Ascending aorta (tissue), 2 donors: ENCODE measurements at regions of chr6 and their contacts with region 1.

Region 1: DNA sequence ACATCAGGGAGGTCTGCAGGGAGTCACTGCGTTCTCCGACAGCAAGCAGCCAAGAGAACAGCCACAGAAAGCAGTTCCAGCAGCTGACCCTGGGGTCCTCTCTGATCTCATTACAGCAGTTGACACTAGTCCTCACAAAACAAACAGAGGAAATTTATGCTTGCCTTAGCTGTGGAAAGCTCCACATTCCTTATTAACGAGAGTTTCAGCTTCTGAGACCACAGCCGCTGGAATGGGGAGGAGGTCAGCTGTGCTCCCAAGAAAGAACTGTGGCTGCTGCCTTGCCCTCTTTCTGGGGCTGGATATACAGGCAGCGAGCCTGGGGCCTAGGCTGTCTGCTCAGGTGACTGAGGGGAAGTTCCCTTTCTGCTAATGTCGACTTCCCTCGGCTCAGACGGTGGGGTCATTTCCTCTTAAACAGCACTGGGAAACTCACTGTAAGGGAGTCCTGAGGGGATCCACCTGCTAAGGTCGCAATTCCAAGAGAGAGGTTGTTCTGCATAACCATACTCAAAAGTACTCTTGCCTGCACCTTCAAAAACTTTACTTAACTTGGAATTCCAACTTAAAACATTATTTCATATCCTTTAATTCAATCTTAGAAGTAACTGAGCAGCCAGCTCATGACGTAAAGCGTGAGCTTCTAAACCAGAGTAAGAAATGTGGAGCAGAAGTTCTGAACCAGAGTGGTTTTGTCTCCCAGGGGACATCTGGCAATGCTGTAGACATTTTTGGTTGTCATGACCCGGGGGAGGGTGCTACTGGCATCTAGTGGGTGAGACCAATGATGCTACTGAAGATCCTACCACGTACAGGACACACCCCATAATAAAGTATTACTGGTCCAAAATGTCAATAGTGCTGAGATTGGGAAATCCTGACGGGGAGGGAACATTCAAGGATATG is 80.3 kb downstream of the BACH2 start:
- DNase-seq: no peak
- H3K4me3 ChIP-seq: no peak overlapping the region
- H3K27ac ChIP-seq: peak overlapping the region; percentile 51 to 81
- H3K4me1 ChIP-seq: peaks cover 3 to 28% of the 10 kb centered on the region in 2 donors
- H3K27me3 ChIP-seq: no peaks in the 10 kb centered on the region
- CTCF ChIP-seq: no peak

Region 2: DNA sequence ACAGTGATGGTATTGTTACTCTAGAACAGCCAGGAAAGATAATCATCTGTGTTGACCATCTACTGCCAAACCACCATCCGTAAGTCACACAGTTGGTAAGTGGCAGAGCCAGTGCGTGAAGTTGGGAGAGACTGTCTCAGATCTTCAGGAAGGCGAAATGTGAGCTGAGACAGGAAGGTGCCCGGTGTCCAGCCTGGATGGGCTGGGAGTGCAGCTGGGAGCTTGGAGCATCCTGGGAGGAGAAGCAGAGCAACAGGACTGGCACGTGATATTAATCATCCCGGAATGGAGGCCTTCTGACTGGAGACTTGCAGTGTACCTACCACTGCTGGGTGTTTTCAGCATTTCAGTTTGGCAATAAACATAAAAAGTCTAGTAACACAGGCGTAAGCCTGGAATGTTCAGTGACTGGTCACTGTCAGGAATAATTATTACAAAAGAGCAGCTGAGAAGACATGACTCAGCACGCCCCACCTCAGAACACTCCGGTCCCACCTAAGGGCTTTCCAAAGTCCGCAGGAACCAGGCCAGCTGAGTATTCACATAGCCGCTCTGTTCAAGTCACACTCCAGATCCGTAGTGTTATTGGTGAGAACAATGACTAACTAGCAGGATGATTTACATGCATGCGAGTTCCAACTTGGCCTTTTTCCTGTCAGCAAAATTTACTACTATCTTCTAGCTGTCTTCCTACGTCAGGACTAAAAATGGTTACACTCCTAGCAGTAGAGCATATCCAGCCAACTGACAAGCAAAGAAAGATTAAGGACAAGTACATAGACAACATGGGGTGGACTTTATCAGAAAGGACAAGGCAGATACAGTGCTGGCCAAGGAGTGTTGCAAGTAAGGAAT is 1180.8 kb before region 1 on chr6:
- intact Hi-C with region 1: loop called (anchors 5 kb)
- DNase-seq: peak; percentile 78 to 95
- H3K4me3 ChIP-seq: peak overlapping the region; percentile 1 to 15
- H3K27ac ChIP-seq: peak overlapping the region; percentile 86 to 87
- H3K4me1 ChIP-seq: peaks cover 4 to 17% of the 10 kb centered on the region in 2 donors
- H3K27me3 ChIP-seq: no peaks in the 10 kb centered on the region
- CTCF ChIP-seq: no peak

Region 3: DNA sequence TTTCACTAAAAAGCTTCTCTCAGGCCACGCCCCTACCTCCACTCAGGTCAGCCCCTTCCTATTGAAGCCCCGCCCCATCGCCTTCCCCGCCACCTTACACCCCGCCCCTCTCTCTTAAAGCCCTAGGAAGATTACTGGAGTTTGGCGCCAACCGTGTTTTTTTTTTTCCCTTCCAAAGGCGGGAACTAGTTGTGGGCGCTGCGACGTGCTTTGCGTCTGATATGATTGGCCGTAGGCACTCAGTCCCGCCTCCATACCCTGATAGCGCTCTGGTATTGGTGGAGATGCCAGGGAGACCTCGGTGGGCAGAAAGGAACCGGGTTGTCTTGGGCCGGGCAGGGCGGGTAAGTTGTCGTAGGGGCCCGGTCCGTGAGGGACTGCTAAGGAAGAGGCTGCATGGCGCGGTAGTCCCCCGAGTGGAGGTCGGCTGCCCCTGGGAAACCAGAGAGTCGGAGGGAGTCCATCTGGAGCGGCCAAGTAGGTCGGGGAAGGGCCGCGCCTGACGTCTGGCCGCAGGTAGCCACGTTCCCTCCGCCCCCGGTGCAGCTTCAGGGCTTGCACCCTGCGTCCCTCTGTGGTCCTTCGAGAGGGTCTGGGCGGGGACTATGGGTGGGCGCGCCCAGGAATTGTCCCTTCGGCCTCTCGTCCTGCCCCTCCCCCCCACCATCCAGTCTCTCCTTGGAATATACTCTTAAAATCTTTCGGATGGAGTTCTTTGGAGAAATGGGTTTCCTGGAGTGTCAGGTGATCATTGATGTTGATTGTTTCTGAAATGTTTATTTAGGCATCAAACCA is 386.5 kb before region 1 on chr6 and contains the start of gene CASP8AP2:
- intact Hi-C with region 1: loop called (anchors 1 kb)
- DNase-seq: peak; percentile 90 to 98
- H3K4me3 ChIP-seq: peak within 1 kb of the TSS; percentile 71 to 73
- H3K27ac ChIP-seq: peak within 1 kb of the TSS; percentile 85 to 89
- H3K4me1 ChIP-seq: peaks cover 0 to 11% of the 10 kb centered on the region in 2 donors
- H3K27me3 ChIP-seq: no peaks in the 10 kb centered on the region
- CTCF ChIP-seq: no peak
- total RNA-seq, gene CASP8AP2: 6.7 TPM

Region 4: GRCh38 chr6:89895276-89895874 is 320.9 kb before region 1 on chr6:
- intact Hi-C with region 1: no loop called
- DNase-seq: no peak
- H3K4me3 ChIP-seq: no peak overlapping the region
- H3K27ac ChIP-seq: no peak overlapping the region
- H3K4me1 ChIP-seq: no peaks in the 10 kb centered on the region
- H3K27me3 ChIP-seq: no peaks in the 10 kb centered on the region
- CTCF ChIP-seq: no peak

Region 5: GRCh38 chr6:89999154-89999553 is 217.2 kb before region 1 on chr6:
- intact Hi-C with region 1: loop called (anchors 5 kb)
- DNase-seq: no peak
- H3K4me3 ChIP-seq: no peak overlapping the region
- H3K27ac ChIP-seq: peak overlapping the region in 1 of 2 donors; percentile 62
- H3K4me1 ChIP-seq: peaks cover 3 to 17% of the 10 kb centered on the region in 2 donors
- H3K27me3 ChIP-seq: no peaks in the 10 kb centered on the region
- CTCF ChIP-seq: no peak

Region 6: GRCh38 chr6:90179190-90180169 is 36.8 kb before region 1 on chr6:
- intact Hi-C with region 1: loop called (anchors 5 kb)
- DNase-seq: no peak
- H3K4me3 ChIP-seq: no peak overlapping the region
- H3K27ac ChIP-seq: no peak overlapping the region
- H3K4me1 ChIP-seq: peaks cover 5 to 25% of the 10 kb centered on the region in 2 donors
- H3K27me3 ChIP-seq: no peaks in the 10 kb centered on the region
- CTCF ChIP-seq: peak in 1 of 3 experiments; percentile 47

Region 7: DNA sequence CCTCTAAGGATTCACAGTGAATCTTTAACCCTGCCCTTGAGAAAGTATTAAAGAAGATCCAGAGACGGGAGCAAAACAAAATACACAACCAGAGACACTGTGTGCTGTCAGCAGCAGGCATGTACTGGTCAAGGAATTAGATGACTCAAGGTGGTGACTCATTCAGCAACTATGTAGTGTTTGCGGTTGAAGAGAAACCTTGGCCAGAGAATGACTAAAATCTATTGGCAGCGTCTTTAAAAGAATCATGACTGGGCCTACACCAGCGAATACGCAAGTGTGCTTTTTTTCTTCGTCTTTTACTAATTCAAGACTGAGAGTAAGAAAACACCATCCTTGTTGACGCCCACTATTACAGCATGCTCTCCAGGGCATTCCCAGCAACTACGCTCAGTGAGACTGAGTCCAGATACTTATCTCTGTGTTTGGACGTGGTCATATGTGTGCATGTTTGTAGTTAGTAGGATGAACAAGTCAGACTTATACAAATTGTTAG is 152.7 kb after region 1 on chr6:
- intact Hi-C with region 1: loop called (anchors 2 kb)
- DNase-seq: peak; percentile 22 to 91
- H3K4me3 ChIP-seq: no peak overlapping the region
- H3K27ac ChIP-seq: peak overlapping the region; percentile 63 to 65
- H3K4me1 ChIP-seq: peaks cover 5 to 8% of the 10 kb centered on the region in 2 donors
- H3K27me3 ChIP-seq: no peaks in the 10 kb centered on the region
- CTCF ChIP-seq: no peak

Region 8: DNA sequence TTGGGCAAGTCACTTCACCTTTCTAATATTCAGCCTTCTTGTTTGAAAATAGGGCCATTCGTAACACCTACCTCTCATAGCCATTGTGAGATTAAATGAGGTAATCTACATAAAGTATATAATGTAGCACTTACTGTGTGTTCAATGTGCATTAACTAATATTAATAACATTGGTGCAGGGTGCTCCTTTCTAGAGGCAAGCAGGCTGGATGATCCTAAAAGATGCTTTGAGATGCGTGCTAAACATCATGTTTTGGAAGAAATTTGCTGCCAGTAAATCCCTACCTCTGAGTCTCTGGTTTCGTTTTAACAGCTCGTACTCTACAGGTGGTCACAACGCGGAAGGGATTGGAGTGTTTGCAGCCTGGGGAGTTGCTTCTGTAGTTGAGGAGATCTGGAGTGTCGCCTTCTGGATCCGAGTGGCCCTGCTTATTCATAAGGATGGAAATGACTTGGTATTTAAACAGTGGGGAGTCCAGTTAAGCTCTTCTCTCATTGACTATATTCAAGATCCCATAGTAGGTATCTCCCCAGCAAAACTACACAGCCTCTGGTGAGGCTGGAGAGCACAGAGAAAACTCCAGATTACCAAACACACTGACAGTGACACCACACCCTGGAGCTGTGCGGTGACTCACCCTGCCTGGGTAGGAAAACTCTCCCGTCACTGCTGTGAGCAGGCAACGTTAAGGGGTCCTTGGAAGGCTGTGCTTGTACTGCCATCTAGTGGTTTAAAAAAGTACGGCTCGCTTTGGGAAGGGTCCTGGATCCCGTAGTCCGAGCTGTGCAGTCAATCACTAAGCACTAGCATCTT is 262.7 kb after region 1 on chr6:
- intact Hi-C with region 1: loop called (anchors 5 kb)
- DNase-seq: peak; percentile 75 to 94
- H3K4me3 ChIP-seq: no peak overlapping the region
- H3K27ac ChIP-seq: no peak overlapping the region
- H3K4me1 ChIP-seq: no peaks in the 10 kb centered on the region
- H3K27me3 ChIP-seq: no peaks in the 10 kb centered on the region
- CTCF ChIP-seq: peak; percentile 83 to 89 (median 83)

Region 9: DNA sequence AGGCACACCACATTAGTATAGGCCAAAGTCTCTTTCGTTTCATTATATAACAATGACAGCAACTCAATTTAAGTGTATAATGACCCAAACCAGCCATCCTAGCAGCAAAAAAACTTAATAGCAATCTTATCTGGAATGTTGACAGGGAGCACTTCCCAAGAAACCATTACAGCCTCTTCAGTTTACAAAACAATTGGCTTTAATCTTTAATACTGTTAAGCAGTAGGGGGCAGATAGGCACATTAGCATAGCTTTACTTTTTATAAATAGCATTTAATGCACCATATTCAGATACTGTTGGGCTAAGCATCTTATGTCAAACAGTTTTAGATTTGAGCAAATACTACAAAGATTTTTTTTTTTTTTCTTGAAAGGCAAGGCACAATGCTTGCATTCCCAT is 563.8 kb after region 1 on chr6:
- intact Hi-C with region 1: no loop called
- DNase-seq: no peak
- H3K4me3 ChIP-seq: no peak overlapping the region
- H3K27ac ChIP-seq: no peak overlapping the region
- H3K4me1 ChIP-seq: no peaks in the 10 kb centered on the region
- H3K27me3 ChIP-seq: no peaks in the 10 kb centered on the region
- CTCF ChIP-seq: no peak

Region 10: GRCh38 chr6:91013511-91013910 is 797.2 kb after region 1 on chr6:
- intact Hi-C with region 1: no loop called
- DNase-seq: no peak
- H3K4me3 ChIP-seq: no peak overlapping the region
- H3K27ac ChIP-seq: no peak overlapping the region
- H3K4me1 ChIP-seq: no peaks in the 10 kb centered on the region
- H3K27me3 ChIP-seq: no peaks in the 10 kb centered on the region
- CTCF ChIP-seq: no peak

Region 11: DNA sequence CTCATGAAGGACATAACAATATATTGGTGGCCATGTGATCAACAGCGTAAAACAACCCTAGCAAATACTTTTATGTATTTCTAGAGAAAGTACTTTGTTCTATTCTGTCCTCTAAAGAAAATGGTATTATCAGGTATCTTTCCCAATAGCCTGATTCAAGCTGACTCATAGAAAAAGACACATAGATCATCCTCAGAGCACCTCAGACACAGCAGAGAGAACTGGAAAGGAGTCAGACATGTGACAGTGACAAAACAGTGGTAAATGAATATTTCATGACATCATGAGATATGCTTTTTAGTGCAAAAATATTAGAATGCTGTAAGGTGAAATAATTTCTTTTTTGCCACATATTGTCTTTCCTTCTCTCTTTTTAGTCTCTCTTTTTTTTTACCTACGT is 1725.5 kb after region 1 on chr6:
- intact Hi-C with region 1: no loop called
- DNase-seq: no peak
- H3K4me3 ChIP-seq: no peak overlapping the region
- H3K27ac ChIP-seq: no peak overlapping the region
- H3K4me1 ChIP-seq: no peaks in the 10 kb centered on the region
- H3K27me3 ChIP-seq: no peaks in the 10 kb centered on the region
- CTCF ChIP-seq: no peak